AG04449 (cell line): ENCODE measurements at regions of chr12 and their contacts with region 1.

Region 1: GRCh38 chr12:108701779-108702441 is 29.4 kb downstream of the CORO1C start:
- DNase-seq: no peak
- H3K4me3 ChIP-seq: no peak overlapping the region
- CTCF ChIP-seq: no peak

Region 2: DNA sequence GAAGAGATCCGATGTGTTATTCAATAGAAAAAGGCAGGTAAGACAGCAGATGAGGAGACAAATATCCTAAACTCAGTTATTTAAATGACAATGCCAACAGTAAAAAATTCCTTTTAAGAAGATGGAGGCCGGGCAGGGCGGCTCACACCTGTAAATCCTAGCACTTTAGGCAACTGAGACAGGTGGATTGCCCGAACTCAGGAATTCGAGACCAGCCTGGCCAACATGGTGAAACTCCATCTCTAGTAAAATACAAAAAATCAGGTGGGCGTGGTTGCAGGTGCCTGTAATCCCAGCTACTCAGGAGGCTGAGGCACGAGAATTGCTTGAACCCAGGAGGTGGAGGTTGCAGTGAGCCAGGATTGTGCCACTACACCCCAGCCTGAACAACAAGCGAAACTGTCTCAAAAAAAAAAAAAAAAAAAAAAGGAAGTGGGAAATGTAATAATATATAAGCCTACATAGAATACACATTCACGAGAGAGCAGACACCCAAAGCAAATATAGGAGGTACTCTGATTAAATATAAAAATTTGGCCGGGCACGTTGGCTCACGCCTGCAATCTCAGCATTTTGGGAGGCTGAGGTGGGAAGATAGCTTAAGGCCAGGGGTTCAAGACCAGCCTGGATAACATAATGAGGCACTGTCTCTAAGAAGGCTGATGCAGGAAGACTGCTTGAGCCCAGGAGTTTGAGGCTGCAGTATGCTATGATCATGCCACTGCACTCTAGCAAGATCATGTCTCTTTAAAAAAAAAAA is 10.4 kb after region 1 on chr12:
- CTCF ChIA-PET with region 1: interaction called, 24 read pairs
- POLR2A ChIA-PET with region 1: interaction called, 5 read pairs
- DNase-seq: no peak
- H3K4me3 ChIP-seq: no peak overlapping the region
- CTCF ChIP-seq: no peak

Region 3: DNA sequence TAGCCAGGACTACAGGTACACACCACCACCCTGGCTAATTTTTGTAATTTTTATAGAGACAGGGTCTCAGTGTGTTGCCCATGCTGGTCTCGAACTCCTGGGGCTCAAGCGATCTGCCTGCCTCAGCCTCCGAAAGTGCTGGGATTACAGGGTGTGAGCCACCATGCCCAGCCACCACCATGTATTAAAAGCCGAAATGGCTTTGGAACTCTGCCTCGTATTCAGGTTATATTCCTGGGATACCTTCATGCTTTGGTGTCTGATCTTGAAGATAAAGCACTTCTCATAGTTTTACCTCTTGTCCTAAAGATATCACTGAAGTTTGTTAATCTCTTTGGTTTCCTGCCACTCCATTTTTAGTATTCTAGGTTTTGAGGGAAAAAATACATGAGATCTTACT is 693.0 kb after region 1 on chr12:
- CTCF ChIA-PET with region 1: no interaction called
- POLR2A ChIA-PET with region 1: no interaction called
- DNase-seq: no peak
- H3K4me3 ChIP-seq: no peak overlapping the region
- CTCF ChIP-seq: no peak